B cell (primary cell): ENCODE measurements at regions of chr1 and their contacts with region 1.

Region 1: DNA sequence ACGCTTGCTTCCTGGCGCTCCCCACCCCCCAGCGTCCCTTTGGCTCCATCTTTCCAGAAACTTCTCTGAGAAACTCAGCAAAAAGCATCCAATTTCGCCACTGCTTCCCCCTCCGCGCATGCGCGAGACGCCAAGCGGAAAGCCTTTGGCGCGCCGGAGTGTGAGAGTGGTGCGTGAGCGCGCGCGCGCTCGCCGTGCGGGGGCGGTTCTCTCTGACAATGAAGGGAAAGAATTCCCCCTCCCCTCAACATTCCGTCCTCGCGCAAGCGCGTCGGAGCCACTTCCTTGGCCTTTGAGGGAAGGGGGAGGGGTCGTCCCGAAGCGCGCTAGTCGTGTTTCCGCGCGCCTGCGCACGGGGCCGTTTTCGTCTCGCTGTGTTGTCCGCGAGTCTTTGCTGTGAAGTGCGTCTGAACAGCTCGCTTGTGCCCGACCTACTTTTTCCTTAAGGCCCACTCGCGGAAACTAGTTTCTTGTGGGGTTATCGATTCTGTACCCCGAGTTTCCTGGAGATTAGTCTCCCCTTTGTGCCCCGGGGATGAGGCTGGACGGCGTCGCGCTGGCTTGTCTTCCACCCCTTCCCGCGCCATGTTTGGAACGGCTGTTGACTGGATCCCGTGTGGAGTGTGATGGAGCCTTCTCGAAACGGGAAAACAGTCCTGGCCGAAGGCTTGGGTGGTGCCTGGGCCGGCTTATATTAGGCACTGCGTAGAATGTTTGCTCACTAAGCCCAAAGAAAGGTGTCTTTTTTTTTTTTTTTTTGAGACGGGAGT is 11.6 kb upstream of the SPEN start:
- DNase-seq: peak; percentile 99
- ATAC-seq: peak; percentile 42
- H3K4me3 ChIP-seq: peak overlapping the region; percentile 82 to 100 (median 97)
- H3K4me3 Mint-ChIP-seq: peak overlapping the region; percentile 97
- H3K27ac ChIP-seq: peak overlapping the region; percentile 98 to 100
- H3K27ac Mint-ChIP-seq: peak overlapping the region; percentile 95
- H3K4me1 ChIP-seq: peaks cover 33 to 43% of the 10 kb centered on the region in 2 donors
- H3K4me1 Mint-ChIP-seq: peaks cover 35% of the 10 kb centered on the region
- H3K27me3 ChIP-seq: no peaks in the 10 kb centered on the region
- H3K27me3 Mint-ChIP-seq: no peaks in the 10 kb centered on the region
- CTCF ChIP-seq: no peak

Region 2: DNA sequence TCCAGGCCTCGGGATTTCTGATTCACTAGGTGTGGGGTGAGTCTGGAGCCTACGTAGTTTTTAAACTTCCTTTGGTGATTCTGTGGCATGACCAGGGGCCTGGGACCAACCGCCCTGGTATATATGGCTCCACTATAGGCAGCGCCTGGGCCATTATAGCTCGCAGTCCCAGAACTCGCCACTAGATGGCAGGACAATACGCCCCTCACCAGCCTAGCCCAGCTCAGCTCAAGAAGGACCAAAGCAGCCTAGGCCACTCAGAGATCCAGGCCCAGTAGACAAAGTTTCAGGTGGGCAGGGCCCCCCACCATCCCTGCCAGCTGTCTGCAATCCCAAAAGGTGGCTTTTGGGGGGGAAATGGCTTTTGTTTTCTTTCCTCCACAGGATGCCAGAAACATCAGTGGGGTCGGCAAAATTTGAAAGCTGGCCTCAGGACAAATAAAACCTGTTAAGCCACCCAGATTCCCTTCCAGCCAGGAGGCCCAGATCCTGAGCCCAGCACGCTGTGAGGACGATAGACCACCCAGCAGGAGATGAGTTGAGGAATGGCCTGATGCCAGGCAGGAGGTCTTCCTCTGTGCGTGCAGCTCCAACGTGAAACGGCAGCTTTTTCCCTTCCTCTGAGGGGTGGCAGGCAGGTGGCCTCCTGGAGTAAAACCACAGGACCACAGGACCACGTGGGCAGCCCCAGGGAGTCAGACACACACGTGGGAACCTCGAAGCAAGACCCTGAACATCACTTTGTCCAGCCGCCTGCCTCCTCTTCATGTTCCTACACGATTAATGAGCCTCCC is 707.2 kb before region 1 on chr1:
- CTCF ChIA-PET with region 1: no interaction called
- POLR2A ChIA-PET with region 1: no interaction called
- intact Hi-C with region 1: no loop called
- DNase-seq: peak; percentile 66
- ATAC-seq: peak; percentile 81
- H3K4me3 ChIP-seq: no peak overlapping the region
- H3K4me3 Mint-ChIP-seq: no peak overlapping the region
- H3K27ac ChIP-seq: no peak overlapping the region
- H3K27ac Mint-ChIP-seq: no peak overlapping the region
- H3K4me1 ChIP-seq: no peaks in the 10 kb centered on the region
- H3K4me1 Mint-ChIP-seq: no peaks in the 10 kb centered on the region
- H3K27me3 ChIP-seq: peaks cover 0 to 11% (median 4%) of the 10 kb centered on the region in 4 experiments
- H3K27me3 Mint-ChIP-seq: peaks cover 15% of the 10 kb centered on the region
- CTCF ChIP-seq: peak; percentile 89

Region 3: DNA sequence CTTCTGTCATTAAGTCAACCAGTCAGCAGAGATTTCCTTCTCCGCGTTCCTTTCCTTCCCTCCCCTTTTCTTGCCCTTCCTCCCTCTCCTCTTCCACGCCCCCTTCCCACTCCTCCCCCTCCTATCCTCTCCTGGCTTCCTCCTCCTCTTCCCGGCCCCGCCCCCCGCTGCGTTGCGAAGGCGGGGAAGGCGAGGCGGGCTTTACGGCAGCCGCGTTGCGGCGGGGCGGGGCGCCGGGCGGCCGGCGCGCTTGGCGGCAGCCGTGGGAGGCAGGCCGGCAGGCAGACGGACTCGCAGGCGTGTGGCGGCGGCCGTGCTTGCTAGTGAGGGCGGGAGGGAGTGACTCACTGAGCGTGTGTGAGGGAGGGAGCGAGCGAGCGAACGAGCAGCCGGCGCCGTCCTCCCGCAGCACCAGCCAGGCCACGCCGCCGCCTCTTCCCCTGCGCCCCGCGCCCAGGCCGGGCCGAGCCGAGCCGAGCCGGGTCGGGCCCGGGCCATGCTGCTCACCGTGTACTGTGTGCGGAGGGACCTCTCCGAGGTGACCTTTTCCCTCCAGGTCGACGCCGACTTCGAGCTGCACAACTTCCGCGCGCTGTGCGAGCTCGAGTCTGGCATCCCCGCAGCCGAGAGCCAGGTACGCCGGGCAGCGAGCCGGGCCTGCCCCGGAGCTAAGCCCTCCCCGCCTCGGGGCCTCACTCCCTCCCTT is 218.6 kb before region 1 on chr1 and contains the start of gene DDI2:
- CTCF ChIA-PET with region 1: no interaction called
- POLR2A ChIA-PET with region 1: no interaction called
- intact Hi-C with region 1: loop called (anchors 2 kb)
- DNase-seq: peak; percentile 94
- ATAC-seq: peak; percentile 88
- H3K4me3 ChIP-seq: peak within 1 kb of the TSS; percentile 82 to 98 (median 90)
- H3K4me3 Mint-ChIP-seq: peak within 1 kb of the TSS; percentile 91
- H3K27ac ChIP-seq: peak within 1 kb of the TSS; percentile 88 to 92
- H3K27ac Mint-ChIP-seq: peak within 1 kb of the TSS; percentile 88
- H3K4me1 ChIP-seq: peaks cover 26 to 32% of the 10 kb centered on the region in 2 donors
- H3K4me1 Mint-ChIP-seq: peaks cover 35% of the 10 kb centered on the region
- H3K27me3 ChIP-seq: no peaks in the 10 kb centered on the region
- H3K27me3 Mint-ChIP-seq: no peaks in the 10 kb centered on the region
- CTCF ChIP-seq: no peak
- total RNA-seq, gene DDI2: 61.0 and 68.3 TPM in 2 replicates

Region 4: GRCh38 chr1:15825800-15826199 is 10.1 kb before region 1 on chr1:
- CTCF ChIA-PET with region 1: interaction called, 13 read pairs
- POLR2A ChIA-PET with region 1: interaction called, 8 read pairs
- intact Hi-C with region 1: no loop called
- DNase-seq: no peak
- ATAC-seq: no peak
- H3K4me3 ChIP-seq: no peak overlapping the region
- H3K4me3 Mint-ChIP-seq: no peak overlapping the region
- H3K27ac ChIP-seq: no peak overlapping the region
- H3K27ac Mint-ChIP-seq: peak overlapping the region; percentile 39
- H3K4me1 ChIP-seq: peaks cover 19 to 33% of the 10 kb centered on the region in 2 donors
- H3K4me1 Mint-ChIP-seq: peaks cover 39% of the 10 kb centered on the region
- H3K27me3 ChIP-seq: no peaks in the 10 kb centered on the region
- H3K27me3 Mint-ChIP-seq: no peaks in the 10 kb centered on the region
- CTCF ChIP-seq: no peak

Region 5: GRCh38 chr1:15847100-15847892 is 11.4 kb after region 1 on chr1 and contains the start of gene SPEN:
- CTCF ChIA-PET with region 1: interaction called, 32 read pairs
- POLR2A ChIA-PET with region 1: interaction called, 221 read pairs
- intact Hi-C with region 1: loop called (anchors 1 kb)
- DNase-seq: peak; percentile 99
- ATAC-seq: peak; percentile 80
- H3K4me3 ChIP-seq: peak within 1 kb of the TSS; percentile 82 to 99 (median 94)
- H3K4me3 Mint-ChIP-seq: peak within 1 kb of the TSS; percentile 97
- H3K27ac ChIP-seq: peak within 1 kb of the TSS; percentile 87 to 98
- H3K27ac Mint-ChIP-seq: peak within 1 kb of the TSS; percentile 99
- H3K4me1 ChIP-seq: peaks cover 51 to 72% of the 10 kb centered on the region in 2 donors
- H3K4me1 Mint-ChIP-seq: peaks cover 53% of the 10 kb centered on the region
- H3K27me3 ChIP-seq: no peaks in the 10 kb centered on the region
- H3K27me3 Mint-ChIP-seq: no peaks in the 10 kb centered on the region
- CTCF ChIP-seq: no peak
- total RNA-seq, gene SPEN: 126 and 140 TPM in 2 replicates

Region 6: GRCh38 chr1:15949453-15950245 is 113.7 kb after region 1 on chr1:
- CTCF ChIA-PET with region 1: interaction called, 3 read pairs
- POLR2A ChIA-PET with region 1: no interaction called
- intact Hi-C with region 1: loop called (anchors 1 kb)
- DNase-seq: peak; percentile 89
- ATAC-seq: peak; percentile 84
- H3K4me3 ChIP-seq: peak overlapping the region in 3 of 5 experiments; percentile 2 to 45 (median 26)
- H3K4me3 Mint-ChIP-seq: peak overlapping the region; percentile 77
- H3K27ac ChIP-seq: peak overlapping the region; percentile 80 to 91
- H3K27ac Mint-ChIP-seq: peak overlapping the region; percentile 97
- H3K4me1 ChIP-seq: peaks cover 35 to 62% of the 10 kb centered on the region in 2 donors
- H3K4me1 Mint-ChIP-seq: peaks cover 66% of the 10 kb centered on the region
- H3K27me3 ChIP-seq: no peaks in the 10 kb centered on the region
- H3K27me3 Mint-ChIP-seq: no peaks in the 10 kb centered on the region
- CTCF ChIP-seq: no peak

Region 7: GRCh38 chr1:15975805-15976680 is 140.1 kb after region 1 on chr1 and contains the start of gene ZBTB17:
- CTCF ChIA-PET with region 1: interaction called, 5 read pairs
- POLR2A ChIA-PET with region 1: interaction called, 10 read pairs
- intact Hi-C with region 1: loop called (anchors 2 kb)
- DNase-seq: peak; percentile 97
- ATAC-seq: peak; percentile 81
- H3K4me3 ChIP-seq: peak within 1 kb of the TSS; percentile 58 to 94 (median 88)
- H3K4me3 Mint-ChIP-seq: peak within 1 kb of the TSS; percentile 93
- H3K27ac ChIP-seq: peak within 1 kb of the TSS; percentile 70 to 86
- H3K27ac Mint-ChIP-seq: peak within 1 kb of the TSS; percentile 92
- H3K4me1 ChIP-seq: peaks cover 20 to 33% of the 10 kb centered on the region in 2 donors
- H3K4me1 Mint-ChIP-seq: peaks cover 35% of the 10 kb centered on the region
- H3K27me3 ChIP-seq: no peaks in the 10 kb centered on the region
- H3K27me3 Mint-ChIP-seq: no peaks in the 10 kb centered on the region
- CTCF ChIP-seq: no peak
- total RNA-seq, gene ZBTB17: 94.1 and 101 TPM in 2 replicates